ENCODE measurements at regions of chr2 and their contacts with region 1.

Region 1: DNA sequence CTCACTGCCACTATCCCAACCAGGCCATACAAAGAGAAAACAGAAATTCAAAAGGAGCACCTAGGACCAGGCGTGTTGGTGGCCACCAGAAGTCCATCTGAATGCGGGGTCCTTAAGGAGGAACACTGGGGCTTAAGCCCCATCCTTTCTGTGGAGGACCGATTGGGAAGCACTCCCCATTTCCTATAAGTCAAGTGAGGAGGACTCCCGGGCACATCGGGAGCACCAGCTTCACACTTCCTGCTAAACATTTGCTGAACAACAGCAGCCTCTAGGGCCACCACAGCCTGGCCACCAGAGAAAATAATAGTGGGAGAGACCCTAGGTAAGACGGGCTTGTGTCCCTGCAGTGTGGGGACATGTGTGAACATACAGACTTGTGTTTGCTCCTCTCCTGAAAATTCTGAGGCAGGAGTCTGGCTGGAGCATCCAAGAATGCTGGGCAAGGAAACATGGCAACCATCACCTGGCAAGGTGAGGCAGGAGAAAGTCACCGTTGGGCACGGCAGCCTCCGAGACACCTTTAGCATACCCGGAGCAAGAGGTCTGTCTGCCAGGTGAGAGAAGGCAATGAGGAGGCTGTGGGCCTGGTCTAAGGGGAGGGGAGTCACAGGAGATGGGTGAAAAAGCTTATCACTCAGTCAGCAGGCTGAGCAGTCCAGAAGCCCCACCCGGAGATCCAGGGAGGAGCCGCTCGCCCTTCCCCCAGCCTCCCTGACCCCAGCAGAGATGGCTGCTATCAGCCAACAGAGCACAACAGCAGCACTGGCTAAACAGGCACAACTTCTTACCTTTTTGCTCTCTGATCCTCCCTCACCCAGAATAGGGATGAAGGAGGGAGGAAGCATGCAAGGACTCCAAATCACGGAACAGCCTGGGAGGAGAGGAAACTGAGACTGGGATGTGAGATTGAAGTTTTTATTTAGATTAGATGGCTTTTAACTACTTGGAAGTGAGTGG is 282.3 kb downstream of the EIPR1 start:
- DNase-seq: no peak
- ATAC-seq: no peak
- H3K4me3 ChIP-seq: no peak overlapping the region
- H3K27ac ChIP-seq: no peak overlapping the region
- H3K4me1 ChIP-seq: no peaks in the 10 kb centered on the region
- H3K27me3 ChIP-seq: peaks cover 0 to 4% (median 0%) of the 10 kb centered on the region in 3 donors
- CTCF ChIP-seq: no peak

Region 2: GRCh38 chr2:2795438-2796091 is 299.7 kb before region 1 on chr2:
- intact Hi-C with region 1: loop called in 1 of 2 experiments (anchors 10 kb)
- DNase-seq: no peak
- ATAC-seq: no peak
- H3K4me3 ChIP-seq: no peak overlapping the region
- H3K27ac ChIP-seq: no peak overlapping the region
- H3K4me1 ChIP-seq: no peaks in the 10 kb centered on the region
- H3K27me3 ChIP-seq: no peaks in the 10 kb centered on the region
- CTCF ChIP-seq: no peak

Region 3: DNA sequence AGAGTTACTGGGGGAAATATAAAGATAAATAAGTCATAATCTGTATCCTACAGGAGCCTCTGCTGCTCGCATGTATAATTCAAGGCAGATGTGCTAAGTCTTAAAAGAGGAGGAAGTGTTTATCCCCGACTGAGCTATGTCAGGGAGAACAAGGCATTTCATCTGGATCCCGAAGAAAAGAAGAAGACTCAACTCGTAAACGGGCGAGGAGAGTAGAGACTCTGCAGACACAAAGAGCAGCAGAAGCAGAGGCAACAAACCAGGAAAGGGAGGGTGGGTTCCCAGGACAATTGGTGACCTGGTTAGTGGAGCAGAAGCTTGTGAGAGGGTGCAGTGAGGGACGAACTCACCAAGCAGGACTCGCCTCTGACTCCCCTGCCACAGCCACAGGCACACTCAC is 86.3 kb before region 1 on chr2:
- intact Hi-C with region 1: no loop called
- DNase-seq: no peak
- ATAC-seq: no peak
- H3K4me3 ChIP-seq: no peak overlapping the region
- H3K27ac ChIP-seq: no peak overlapping the region
- H3K4me1 ChIP-seq: no peaks in the 10 kb centered on the region
- H3K27me3 ChIP-seq: peaks cover 0 to 4% (median 0%) of the 10 kb centered on the region in 3 donors
- CTCF ChIP-seq: no peak

Measured in psoas muscle (tissue), 8 donors.